Pancreas (tissue), 10 donors: ENCODE measurements at regions of chr20 and their contacts with region 1.

Region 1: DNA sequence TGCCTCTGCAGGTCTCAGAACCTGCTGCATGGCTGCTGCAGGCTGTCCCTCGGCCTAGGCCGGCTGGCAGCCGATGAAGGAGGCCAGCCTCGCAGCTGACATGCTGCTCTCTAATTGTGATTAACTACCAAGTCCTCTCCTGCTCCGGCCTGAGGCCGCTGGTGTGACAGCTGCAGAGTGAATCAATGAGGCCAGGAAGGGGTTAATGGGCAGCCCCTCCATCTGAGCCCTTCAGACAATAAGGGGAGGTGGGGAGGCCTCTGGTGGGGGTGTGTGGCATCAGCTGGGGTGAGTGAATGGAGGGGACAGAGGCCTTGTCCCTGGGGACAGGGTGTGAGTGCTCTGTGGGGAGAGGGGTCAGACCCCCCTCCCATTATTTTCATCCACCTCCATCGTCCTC is 34.4 kb downstream of the SLC52A3 start:
- DNase-seq: no peak
- ATAC-seq: no peak
- H3K4me3 ChIP-seq: no peak overlapping the region
- H3K27ac ChIP-seq: no peak overlapping the region
- H3K4me1 ChIP-seq: no peaks in the 10 kb centered on the region
- H3K27me3 ChIP-seq: no peaks in the 10 kb centered on the region
- CTCF ChIP-seq: no peak

Region 2: DNA sequence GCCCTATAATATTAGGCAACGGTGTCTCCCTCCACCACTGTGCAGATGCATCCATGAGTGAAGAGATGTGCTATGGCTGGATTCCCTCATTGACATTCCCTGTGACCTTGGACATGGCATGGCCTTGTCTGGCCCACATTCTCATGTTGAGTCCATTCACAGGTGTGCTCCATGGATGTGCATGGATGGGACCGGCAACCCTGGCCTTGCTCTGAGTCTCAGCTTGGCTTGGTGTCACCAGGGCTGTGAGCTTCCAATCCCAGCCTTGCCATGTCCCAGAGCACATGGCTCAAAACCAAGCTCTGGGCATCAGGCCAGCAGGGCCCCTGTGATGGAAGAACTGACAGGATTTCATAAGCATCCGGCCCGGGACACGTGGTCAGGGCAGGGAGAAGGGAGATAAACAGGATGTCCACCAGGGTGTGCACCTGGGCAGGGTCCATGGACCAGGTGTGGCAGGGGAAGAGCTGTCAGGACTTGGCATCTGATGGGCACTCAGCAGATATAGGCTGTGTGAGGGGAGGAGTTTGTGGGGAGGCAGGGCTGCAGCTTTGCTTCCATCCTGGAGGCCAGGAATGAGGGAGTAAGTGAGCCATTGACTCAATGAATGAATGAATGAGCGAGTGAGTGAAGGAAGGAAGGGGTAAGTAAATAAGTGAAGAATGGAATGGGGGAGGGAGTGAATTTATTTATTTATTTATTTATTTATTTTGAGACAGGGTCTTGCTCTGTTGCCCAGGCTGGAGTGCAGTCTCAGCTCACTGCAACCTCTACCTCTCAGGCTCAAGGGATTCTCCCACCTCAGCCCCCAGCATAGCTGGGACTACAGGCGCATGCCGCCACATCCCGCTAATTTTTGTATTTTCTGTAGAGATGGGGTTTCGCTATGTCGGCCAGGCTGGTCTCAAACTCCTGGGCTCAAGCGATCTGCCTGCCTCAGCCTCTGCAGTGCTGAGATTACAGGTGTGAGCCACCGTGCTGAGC is 371.3 kb before region 1 on chr20:
- intact Hi-C with region 1: loop called in 1 of 3 experiments (anchors 10 kb)
- DNase-seq: peak; percentile 87 to 98 (median 92)
- ATAC-seq: peak; percentile 80 to 94 (median 92)
- H3K4me3 ChIP-seq: no peak overlapping the region
- H3K27ac ChIP-seq: no peak overlapping the region
- H3K4me1 ChIP-seq: peaks cover 0 to 6% (median 0%) of the 10 kb centered on the region in 3 donors
- H3K27me3 ChIP-seq: no peaks in the 10 kb centered on the region
- CTCF ChIP-seq: peak in 3 of 4 donors; percentile 23 to 37 (median 36)

Region 3: GRCh38 chr20:561437-562231 is 172.2 kb before region 1 on chr20:
- intact Hi-C with region 1: loop called in 2 of 3 experiments (anchors 5 to 10 kb)
- DNase-seq: peak in 3 of 6 donors; percentile 36 to 66 (median 38)
- ATAC-seq: peak; percentile 75 to 92 (median 90)
- H3K4me3 ChIP-seq: no peak overlapping the region
- H3K27ac ChIP-seq: no peak overlapping the region
- H3K4me1 ChIP-seq: no peaks in the 10 kb centered on the region
- H3K27me3 ChIP-seq: no peaks in the 10 kb centered on the region
- CTCF ChIP-seq: peak; percentile 86 to 92 (median 87)